OCI-LY7 (cell line): ENCODE measurements at regions of chr3 and their contacts with region 1.

Region 1: DNA sequence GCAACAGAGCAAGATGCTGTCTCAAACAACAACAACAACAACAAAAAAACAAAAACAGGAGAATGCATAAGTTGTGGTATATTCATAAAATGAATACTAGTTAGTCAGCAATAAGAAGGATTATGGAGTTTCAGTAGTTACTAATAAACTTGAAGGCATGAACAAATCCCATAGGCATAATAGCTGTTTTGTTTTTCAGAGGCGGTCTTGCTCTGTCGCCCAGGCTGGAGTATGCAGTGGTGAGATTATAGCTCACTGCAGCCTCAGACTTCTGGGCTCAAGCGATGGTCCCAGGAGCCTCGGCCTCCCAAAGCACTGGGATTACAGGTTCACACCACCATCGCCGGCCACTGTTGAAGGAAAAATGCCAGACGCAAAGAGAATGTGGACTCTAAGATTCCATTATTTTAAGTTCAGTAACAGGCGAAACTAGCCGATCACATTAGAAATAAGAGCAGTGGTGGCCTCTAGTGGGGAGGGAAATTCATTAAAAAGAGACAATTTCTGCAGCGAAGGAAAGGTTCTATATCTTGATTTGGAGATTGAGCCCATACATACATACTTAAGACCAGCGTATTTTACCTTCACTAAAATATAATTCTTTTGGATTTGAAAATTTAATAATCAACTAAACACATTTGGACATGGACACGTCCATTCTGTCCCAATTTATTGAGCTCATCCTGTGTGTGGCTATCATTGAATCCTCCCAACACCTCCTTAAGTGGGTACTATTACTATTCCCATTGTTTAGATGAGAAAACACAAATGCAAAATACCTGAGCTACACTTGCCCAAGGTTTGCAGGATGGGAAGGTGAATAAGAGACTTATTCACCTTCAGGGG is 27.4 kb upstream of the HDAC11 start:
- DNase-seq: peak; percentile 77
- H3K4me3 ChIP-seq: peak overlapping the region; percentile 65
- H3K27ac ChIP-seq: peak overlapping the region; percentile 83
- H3K4me1 ChIP-seq: peaks cover 24% of the 10 kb centered on the region
- CTCF ChIP-seq: peak; percentile 95

Region 2: DNA sequence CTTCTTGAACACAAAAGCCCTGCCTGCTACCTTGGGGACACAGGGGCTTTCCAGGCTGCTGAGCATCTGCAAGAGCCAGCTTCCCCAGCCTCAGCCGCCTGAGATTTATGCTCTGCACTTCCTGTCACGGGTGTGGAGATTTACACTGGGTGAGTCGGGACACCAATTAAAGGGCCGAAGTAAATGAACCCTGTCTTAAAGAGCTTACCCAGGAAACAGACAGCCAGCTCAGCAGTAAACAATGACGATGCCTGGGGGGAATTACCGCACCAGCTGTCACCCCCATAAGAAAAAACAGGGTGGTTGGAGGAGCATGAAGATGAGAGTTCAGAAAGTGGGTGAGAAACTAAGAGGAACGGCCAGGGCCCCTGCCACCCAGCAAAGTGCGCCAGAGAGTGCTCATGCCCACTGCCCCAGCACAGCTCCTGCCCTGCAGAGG is 342.0 kb before region 1 on chr3:
- CTCF ChIA-PET with region 1: interaction called, 4 read pairs
- POLR2A ChIA-PET with region 1: no interaction called
- intact Hi-C with region 1: loop called (anchors 5 kb)
- DNase-seq: peak; percentile 94
- H3K4me3 ChIP-seq: peak overlapping the region; percentile 54
- H3K27ac ChIP-seq: peak overlapping the region; percentile 84
- H3K4me1 ChIP-seq: peaks cover 45% of the 10 kb centered on the region
- CTCF ChIP-seq: no peak

Region 3: GRCh38 chr3:13332158-13332557 is 120.6 kb before region 1 on chr3:
- CTCF ChIA-PET with region 1: no interaction called
- POLR2A ChIA-PET with region 1: interaction called, 3 read pairs
- intact Hi-C with region 1: loop called (anchors 1 kb)
- DNase-seq: peak; percentile 98
- H3K4me3 ChIP-seq: peak overlapping the region; percentile 50
- H3K27ac ChIP-seq: peak overlapping the region; percentile 95
- H3K4me1 ChIP-seq: peaks cover 91% of the 10 kb centered on the region
- CTCF ChIP-seq: no peak

Region 4: DNA sequence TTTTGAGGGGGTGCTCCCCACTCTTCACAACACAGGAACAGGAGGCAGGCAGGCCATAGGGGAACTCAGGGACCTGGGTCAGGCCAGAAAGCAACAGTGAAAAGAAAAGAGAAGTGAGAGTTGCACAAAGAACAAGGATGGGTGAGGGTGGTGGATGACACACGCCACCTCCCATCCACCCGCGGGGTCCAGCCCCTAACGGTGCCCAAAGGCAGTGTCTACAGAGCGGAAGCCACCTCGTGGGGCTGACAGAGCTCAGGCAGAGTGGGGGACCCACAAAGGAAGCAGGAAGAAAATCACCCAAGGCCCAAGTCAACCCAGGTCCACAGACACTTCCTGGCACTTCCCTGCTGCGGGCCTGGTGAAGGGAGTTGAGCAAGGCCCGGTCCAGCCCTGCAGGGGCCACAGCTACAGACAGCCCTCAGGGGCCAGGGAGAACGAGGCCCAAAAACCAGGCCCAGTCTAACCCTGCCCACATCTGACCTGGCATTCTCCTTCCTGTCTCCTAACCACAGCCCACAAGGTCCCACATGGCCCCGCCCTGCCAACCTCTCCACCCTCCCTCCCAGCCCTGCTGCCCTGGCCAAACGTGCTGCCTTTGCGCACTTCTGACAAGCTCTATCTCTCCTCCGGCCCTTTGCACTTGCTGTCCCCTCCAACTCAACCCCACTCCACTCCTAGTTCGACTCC is 38.5 kb before region 1 on chr3:
- CTCF ChIA-PET with region 1: interaction called, 13 read pairs
- POLR2A ChIA-PET with region 1: interaction called, 61 read pairs
- intact Hi-C with region 1: loop called (anchors 1 kb)
- DNase-seq: peak; percentile 90
- H3K4me3 ChIP-seq: peak overlapping the region; percentile 98
- H3K27ac ChIP-seq: peak overlapping the region; percentile 91
- H3K4me1 ChIP-seq: peaks cover 58% of the 10 kb centered on the region
- CTCF ChIP-seq: 0 out of 2 replicates have a peak, but pooled peaks have one; percentile 17

Region 5: DNA sequence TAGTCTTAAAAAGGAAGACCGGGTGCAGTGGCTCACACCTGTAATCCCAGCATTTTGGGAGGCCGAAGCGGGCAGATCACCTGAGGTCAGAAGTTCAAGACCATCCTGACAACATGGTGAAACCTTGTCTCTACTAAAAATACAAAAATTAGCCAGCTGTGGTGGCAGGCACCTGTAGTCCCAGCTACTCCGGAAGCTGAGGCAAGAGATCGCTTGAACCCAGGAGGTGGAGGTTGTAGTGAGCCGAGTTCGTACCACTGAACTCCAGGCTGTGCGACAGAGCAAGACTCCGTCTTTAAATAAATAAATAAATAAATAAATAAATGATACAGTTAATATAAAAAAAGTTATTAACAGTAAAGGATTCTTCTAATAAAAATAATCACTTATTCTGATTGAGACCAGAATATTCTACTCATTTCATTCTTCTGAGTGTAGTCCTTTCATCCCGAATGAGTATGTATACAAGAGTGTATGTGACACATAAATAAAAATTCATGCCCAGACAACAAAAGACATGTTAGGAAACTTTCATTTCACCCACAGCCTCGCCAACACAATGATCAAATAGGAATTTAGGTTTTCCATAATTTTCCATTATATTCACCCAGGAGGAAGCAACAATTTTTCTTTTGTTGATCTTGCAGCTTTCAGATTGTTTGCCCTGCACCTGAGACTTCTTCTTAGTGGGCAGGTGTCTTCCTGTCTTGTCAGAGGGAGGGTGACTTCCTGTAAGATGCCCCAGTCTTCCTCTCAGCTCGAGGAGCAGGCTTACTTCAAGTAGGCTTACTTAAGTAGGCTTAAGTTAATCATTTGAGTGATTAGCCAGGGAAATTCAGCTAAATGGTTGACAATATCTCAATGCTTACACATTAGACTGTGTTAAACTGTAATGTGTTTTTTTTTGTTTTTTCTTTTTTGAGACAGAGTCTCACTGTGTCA is 24.8 kb before region 1 on chr3:
- CTCF ChIA-PET with region 1: interaction called, 5 read pairs
- POLR2A ChIA-PET with region 1: interaction called, 17 read pairs
- intact Hi-C with region 1: loop called (anchors 1 kb)
- DNase-seq: peak; percentile 89
- H3K4me3 ChIP-seq: peak overlapping the region; percentile 53
- H3K27ac ChIP-seq: peak overlapping the region; percentile 92
- H3K4me1 ChIP-seq: peaks cover 57% of the 10 kb centered on the region
- CTCF ChIP-seq: no peak